ENCODE measurements at regions of chr11 and their contacts with region 1.

Region 1: GRCh38 chr11:122754553-122755322 is 83.6 kb upstream of the CRTAM start:
- DNase-seq: peak; percentile 29 to 60 (median 55)
- H3K4me3 ChIP-seq: no peak overlapping the region
- H3K4me3 Mint-ChIP-seq: peak overlapping the region in 1 of 2 donors; percentile 55
- H3K27ac ChIP-seq: peak overlapping the region in 1 of 2 donors; percentile 76
- H3K27ac Mint-ChIP-seq: peak overlapping the region in 5 of 7 donors; percentile 38 to 95 (median 91)
- H3K4me1 ChIP-seq: peaks cover 32 to 47% of the 10 kb centered on the region in 2 donors
- H3K4me1 Mint-ChIP-seq: peaks cover 45% of the 10 kb centered on the region
- H3K27me3 ChIP-seq: no peaks in the 10 kb centered on the region
- H3K27me3 Mint-ChIP-seq: peaks cover 0 to 3% (median 1%) of the 10 kb centered on the region in 3 donors
- CTCF ChIP-seq: peak; percentile 83

Region 2: DNA sequence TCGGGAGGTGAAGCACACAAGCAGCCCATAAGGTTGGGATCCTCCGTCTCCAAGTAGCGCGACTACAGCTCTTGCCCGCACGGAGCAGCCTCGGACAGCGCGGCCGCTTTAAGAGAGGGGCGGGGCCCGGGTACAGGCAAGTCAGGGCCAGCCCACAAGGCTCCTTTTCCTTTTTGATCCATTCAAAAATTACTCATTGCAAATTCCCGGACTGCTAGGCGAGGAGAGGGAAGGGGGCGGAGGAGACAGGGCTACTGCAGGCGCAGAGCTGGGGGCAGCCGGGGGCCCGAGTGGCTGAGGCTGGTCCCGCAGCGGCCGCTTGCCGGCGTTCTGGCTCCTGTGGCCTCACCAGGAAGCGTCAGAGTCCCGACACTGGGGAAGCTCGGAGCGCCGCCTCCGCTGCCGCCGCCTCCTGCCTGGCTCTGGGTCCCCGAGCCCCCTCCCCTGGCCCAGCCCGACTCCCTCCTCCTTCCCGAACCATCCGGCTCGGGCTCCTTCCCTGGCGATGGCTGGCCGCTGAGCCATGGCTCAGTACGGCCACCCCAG is 99.1 kb before region 1 on chr11 and contains the start of gene UBASH3B:
- intact Hi-C with region 1: loop called in 1 of 2 experiments (anchors 2 kb)
- DNase-seq: peak; percentile 52 to 60 (median 59)
- H3K4me3 ChIP-seq: peak within 1 kb of the TSS; percentile 86 to 90 (median 88)
- H3K4me3 Mint-ChIP-seq: peak within 1 kb of the TSS; percentile 99
- H3K27ac ChIP-seq: peak within 1 kb of the TSS; percentile 83 to 88
- H3K27ac Mint-ChIP-seq: peak within 1 kb of the TSS; percentile 88 to 96 (median 94)
- H3K4me1 ChIP-seq: peaks cover 56 to 58% of the 10 kb centered on the region in 2 donors
- H3K4me1 Mint-ChIP-seq: peaks cover 55% of the 10 kb centered on the region
- H3K27me3 ChIP-seq: no peaks in the 10 kb centered on the region
- H3K27me3 Mint-ChIP-seq: peaks cover 12 to 19% (median 17%) of the 10 kb centered on the region in 3 donors
- CTCF ChIP-seq: no peak
- polyA plus RNA-seq, gene UBASH3B: 3.3 to 13.5 (median 7.1) TPM

Region 3: GRCh38 chr11:122681735-122682134 is 73.0 kb before region 1 on chr11:
- intact Hi-C with region 1: loop called in 1 of 2 experiments (anchors 10 kb)
- DNase-seq: peak in 1 of 3 donors; percentile 53
- H3K4me3 ChIP-seq: no peak overlapping the region
- H3K4me3 Mint-ChIP-seq: no peak overlapping the region
- H3K27ac ChIP-seq: no peak overlapping the region
- H3K27ac Mint-ChIP-seq: peak overlapping the region in 1 of 7 donors; percentile 61
- H3K4me1 ChIP-seq: peaks cover 0 to under 1% of the 10 kb centered on the region in 2 donors
- H3K4me1 Mint-ChIP-seq: peaks cover 29% of the 10 kb centered on the region
- H3K27me3 ChIP-seq: no peaks in the 10 kb centered on the region
- H3K27me3 Mint-ChIP-seq: no peaks in the 10 kb centered on the region
- CTCF ChIP-seq: no peak